Activated CD8-positive, alpha-beta T cell treated with anti-CD3 and anti-CD28 coated beads for 36 hours (primary cell): ENCODE measurements at regions of chr10 and their contacts with region 1.

Region 1: GRCh38 chr10:114304017-114304570 is 65.0 kb downstream of the VWA2 start:
- DNase-seq: peak; percentile 92
- ATAC-seq: peak; percentile 72
- H3K4me3 Mint-ChIP-seq: peak overlapping the region; percentile 86
- H3K27ac Mint-ChIP-seq: peak overlapping the region; percentile 89
- H3K4me1 Mint-ChIP-seq: peaks cover 13% of the 10 kb centered on the region
- H3K27me3 Mint-ChIP-seq: no peaks in the 10 kb centered on the region
- CTCF ChIP-seq: peak; percentile 62

Region 2: DNA sequence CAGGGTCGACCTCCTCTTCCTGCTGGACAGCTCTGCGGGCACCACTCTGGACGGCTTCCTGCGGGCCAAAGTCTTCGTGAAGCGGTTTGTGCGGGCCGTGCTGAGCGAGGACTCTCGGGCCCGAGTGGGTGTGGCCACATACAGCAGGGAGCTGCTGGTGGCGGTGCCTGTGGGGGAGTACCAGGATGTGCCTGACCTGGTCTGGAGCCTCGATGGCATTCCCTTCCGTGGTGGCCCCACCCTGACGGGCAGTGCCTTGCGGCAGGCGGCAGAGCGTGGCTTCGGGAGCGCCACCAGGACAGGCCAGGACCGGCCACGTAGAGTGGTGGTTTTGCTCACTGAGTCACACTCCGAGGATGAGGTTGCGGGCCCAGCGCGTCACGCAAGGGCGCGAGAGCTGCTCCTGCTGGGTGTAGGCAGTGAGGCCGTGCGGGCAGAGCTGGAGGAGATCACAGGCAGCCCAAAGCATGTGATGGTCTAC is 18.1 kb before region 1 on chr10:
- CTCF ChIA-PET with region 1: interaction called, 18 read pairs
- POLR2A ChIA-PET with region 1: no interaction called
- intact Hi-C with region 1: no loop called
- DNase-seq: no peak
- ATAC-seq: no peak
- H3K4me3 Mint-ChIP-seq: no peak overlapping the region
- H3K27ac Mint-ChIP-seq: no peak overlapping the region
- H3K4me1 Mint-ChIP-seq: no peaks in the 10 kb centered on the region
- H3K27me3 Mint-ChIP-seq: no peaks in the 10 kb centered on the region
- CTCF ChIP-seq: no peak

Region 3: GRCh38 chr10:114346271-114347031 is 42.4 kb after region 1 on chr10:
- CTCF ChIA-PET with region 1: interaction called, 16 read pairs
- POLR2A ChIA-PET with region 1: no interaction called
- intact Hi-C with region 1: no loop called
- DNase-seq: no peak
- ATAC-seq: no peak
- H3K4me3 Mint-ChIP-seq: no peak overlapping the region
- H3K27ac Mint-ChIP-seq: peak overlapping the region; percentile 55
- H3K4me1 Mint-ChIP-seq: peaks cover 8% of the 10 kb centered on the region
- H3K27me3 Mint-ChIP-seq: no peaks in the 10 kb centered on the region
- CTCF ChIP-seq: no peak

Region 4: GRCh38 chr10:114412907-114413386 is 108.9 kb after region 1 on chr10:
- CTCF ChIA-PET with region 1: interaction called, 17 read pairs
- POLR2A ChIA-PET with region 1: no interaction called
- intact Hi-C with region 1: no loop called
- DNase-seq: no peak
- ATAC-seq: no peak
- H3K4me3 Mint-ChIP-seq: no peak overlapping the region
- H3K27ac Mint-ChIP-seq: no peak overlapping the region
- H3K4me1 Mint-ChIP-seq: no peaks in the 10 kb centered on the region
- H3K27me3 Mint-ChIP-seq: peaks cover 26% of the 10 kb centered on the region
- CTCF ChIP-seq: no peak

Region 5: GRCh38 chr10:114458955-114459354 is 154.9 kb after region 1 on chr10:
- CTCF ChIA-PET with region 1: interaction called, 46 read pairs
- POLR2A ChIA-PET with region 1: no interaction called
- intact Hi-C with region 1: loop called (anchors 1 kb)
- DNase-seq: peak; percentile 70
- ATAC-seq: peak; percentile 74
- H3K4me3 Mint-ChIP-seq: no peak overlapping the region
- H3K27ac Mint-ChIP-seq: peak overlapping the region; percentile 36
- H3K4me1 Mint-ChIP-seq: peaks cover 22% of the 10 kb centered on the region
- H3K27me3 Mint-ChIP-seq: no peaks in the 10 kb centered on the region
- CTCF ChIP-seq: peak; percentile 43

Region 6: GRCh38 chr10:114550756-114551635 is 246.9 kb after region 1 on chr10:
- CTCF ChIA-PET with region 1: interaction called, 24 read pairs
- POLR2A ChIA-PET with region 1: no interaction called
- intact Hi-C with region 1: loop called (anchors 5 kb)
- DNase-seq: no peak
- ATAC-seq: no peak
- H3K4me3 Mint-ChIP-seq: no peak overlapping the region
- H3K27ac Mint-ChIP-seq: no peak overlapping the region
- H3K4me1 Mint-ChIP-seq: peaks cover 18% of the 10 kb centered on the region
- H3K27me3 Mint-ChIP-seq: no peaks in the 10 kb centered on the region
- CTCF ChIP-seq: peak; percentile 78

Region 7: DNA sequence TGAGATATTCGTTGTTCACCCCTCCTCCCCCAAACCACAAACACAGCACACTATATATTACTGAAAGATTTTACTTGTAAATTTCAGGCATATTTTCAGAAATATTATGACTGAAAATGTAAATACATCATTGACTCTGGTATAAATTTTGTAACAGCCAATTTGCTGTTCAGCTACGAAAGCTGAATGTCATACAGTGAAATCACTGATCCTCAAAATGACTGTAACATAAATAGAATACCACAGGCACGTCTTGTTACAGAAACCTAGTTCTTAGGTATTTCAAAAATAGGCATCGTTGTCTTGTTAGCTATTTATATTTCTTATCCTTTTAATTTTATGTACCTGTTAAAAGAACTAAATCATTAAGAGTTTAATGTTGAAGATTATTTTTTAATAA is 649.0 kb after region 1 on chr10:
- CTCF ChIA-PET with region 1: no interaction called
- POLR2A ChIA-PET with region 1: no interaction called
- intact Hi-C with region 1: no loop called
- DNase-seq: no peak
- ATAC-seq: no peak
- H3K4me3 Mint-ChIP-seq: no peak overlapping the region
- H3K27ac Mint-ChIP-seq: no peak overlapping the region
- H3K4me1 Mint-ChIP-seq: peaks cover 53% of the 10 kb centered on the region
- H3K27me3 Mint-ChIP-seq: no peaks in the 10 kb centered on the region
- CTCF ChIP-seq: no peak